Activated CD8-positive, alpha-beta T cell treated with anti-CD3 and anti-CD28 coated beads for 36 hours (primary cell): ENCODE measurements at regions of chr3 and their contacts with region 1.

Region 1: DNA sequence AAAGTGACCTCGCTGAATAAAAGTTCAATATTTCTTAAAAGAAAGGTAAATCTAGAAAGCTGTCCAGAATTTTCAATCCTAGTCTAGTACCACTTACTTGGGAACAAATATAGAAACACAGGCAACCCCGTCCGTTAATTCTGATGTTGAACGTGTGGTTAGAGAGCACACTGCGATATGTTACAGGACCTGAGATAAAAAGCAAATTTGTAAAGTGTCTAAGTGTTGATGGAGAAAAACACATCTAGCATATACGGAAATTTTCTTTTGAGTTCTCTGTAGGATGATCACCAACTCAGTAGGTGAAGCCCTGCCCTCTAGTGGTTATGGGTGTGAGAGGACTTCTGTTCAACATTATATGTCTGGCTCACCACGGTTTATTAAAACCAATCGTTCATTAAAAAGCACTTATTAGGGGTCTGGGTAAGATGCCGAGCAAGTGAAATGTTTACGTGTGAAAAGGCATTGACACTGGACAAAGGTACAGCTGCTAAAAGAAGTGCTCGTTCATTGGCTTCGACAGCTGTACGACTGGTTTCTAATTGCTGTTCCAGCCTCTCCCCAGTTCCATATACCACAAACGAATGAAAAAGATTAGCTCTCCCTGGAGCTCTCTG is 1.0 kb upstream of the ATP2C1 start:
- DNase-seq: peak; percentile 84
- ATAC-seq: peak; percentile 57
- H3K4me3 Mint-ChIP-seq: peak overlapping the region; percentile 97
- H3K27ac Mint-ChIP-seq: peak overlapping the region; percentile 98
- H3K4me1 Mint-ChIP-seq: peaks cover 32% of the 10 kb centered on the region
- H3K27me3 Mint-ChIP-seq: no peaks in the 10 kb centered on the region
- CTCF ChIP-seq: peak; percentile 91

Region 2: GRCh38 chr3:130529513-130530215 is 363.2 kb before region 1 on chr3:
- CTCF ChIA-PET with region 1: no interaction called
- POLR2A ChIA-PET with region 1: no interaction called
- intact Hi-C with region 1: no loop called
- DNase-seq: no peak
- ATAC-seq: peak; percentile 27
- H3K4me3 Mint-ChIP-seq: no peak overlapping the region
- H3K27ac Mint-ChIP-seq: no peak overlapping the region
- H3K4me1 Mint-ChIP-seq: peaks cover 10% of the 10 kb centered on the region
- H3K27me3 Mint-ChIP-seq: peaks cover 4% of the 10 kb centered on the region
- CTCF ChIP-seq: no peak

Region 3: DNA sequence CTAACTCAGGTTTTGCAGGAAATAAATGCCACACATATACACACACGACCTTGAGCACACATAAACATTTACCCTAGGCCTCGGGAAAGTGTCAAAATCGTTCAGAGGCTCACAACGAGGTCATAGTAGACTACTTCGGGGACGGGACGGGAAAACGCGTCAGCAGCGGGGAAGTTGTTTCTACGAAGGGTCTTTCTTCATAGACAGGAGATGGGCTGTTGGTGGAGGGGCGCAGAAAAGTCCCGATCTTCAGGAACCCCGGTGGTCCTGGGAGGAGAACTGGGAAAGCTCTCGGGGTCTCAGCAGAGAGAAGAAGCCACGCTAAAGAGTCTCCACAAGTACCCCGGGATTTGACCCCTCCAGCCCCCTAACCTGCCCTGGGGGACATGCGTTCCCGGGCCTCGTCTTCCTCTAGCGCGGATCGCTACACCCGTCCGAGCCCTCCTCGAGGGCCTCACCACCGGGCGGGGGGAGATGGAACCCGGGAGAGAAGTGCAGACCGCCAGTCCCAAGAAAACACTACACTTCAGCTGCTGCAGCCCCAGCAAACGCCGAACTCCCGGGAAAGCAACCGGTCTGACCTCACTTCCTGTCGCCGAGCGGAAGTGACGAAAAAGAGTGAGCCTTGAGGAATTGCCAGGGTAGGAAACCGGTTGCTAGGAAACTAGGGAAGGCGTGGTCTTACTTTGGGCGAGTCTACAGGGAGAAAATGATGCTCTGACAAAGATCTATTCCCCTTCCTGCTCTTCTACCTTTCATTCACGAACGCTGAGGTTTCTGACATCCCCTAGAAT is 146.4 kb before region 1 on chr3 and contains the start of gene PIK3R4:
- CTCF ChIA-PET with region 1: interaction called, 13 read pairs
- POLR2A ChIA-PET with region 1: interaction called, 17 read pairs
- intact Hi-C with region 1: no loop called
- DNase-seq: peak; percentile 98
- ATAC-seq: peak; percentile 84
- H3K4me3 Mint-ChIP-seq: peak within 1 kb of the TSS; percentile 85
- H3K27ac Mint-ChIP-seq: peak within 1 kb of the TSS; percentile 95
- H3K4me1 Mint-ChIP-seq: peaks cover 45% of the 10 kb centered on the region
- H3K27me3 Mint-ChIP-seq: no peaks in the 10 kb centered on the region
- CTCF ChIP-seq: no peak
- total RNA-seq, gene PIK3R4: 27.4 to 28.4 TPM

Region 4: GRCh38 chr3:130850044-130850797 is 42.6 kb before region 1 on chr3:
- CTCF ChIA-PET with region 1: interaction called, 16 read pairs
- POLR2A ChIA-PET with region 1: interaction called, 23 read pairs
- intact Hi-C with region 1: no loop called
- DNase-seq: peak; percentile 80
- ATAC-seq: peak; percentile 96
- H3K4me3 Mint-ChIP-seq: peak overlapping the region; percentile 57
- H3K27ac Mint-ChIP-seq: peak overlapping the region; percentile 60
- H3K4me1 Mint-ChIP-seq: peaks cover 40% of the 10 kb centered on the region
- H3K27me3 Mint-ChIP-seq: peaks cover 25% of the 10 kb centered on the region
- CTCF ChIP-seq: no peak

Region 5: GRCh38 chr3:130929804-130930203 is 36.9 kb after region 1 on chr3:
- CTCF ChIA-PET with region 1: interaction called, 11 read pairs
- POLR2A ChIA-PET with region 1: interaction called, 3 read pairs
- intact Hi-C with region 1: no loop called
- DNase-seq: no peak
- ATAC-seq: no peak
- H3K4me3 Mint-ChIP-seq: no peak overlapping the region
- H3K27ac Mint-ChIP-seq: no peak overlapping the region
- H3K4me1 Mint-ChIP-seq: peaks cover 35% of the 10 kb centered on the region
- H3K27me3 Mint-ChIP-seq: no peaks in the 10 kb centered on the region
- CTCF ChIP-seq: no peak

Region 6: GRCh38 chr3:131053043-131053859 is 160.4 kb after region 1 on chr3:
- CTCF ChIA-PET with region 1: no interaction called
- POLR2A ChIA-PET with region 1: no interaction called
- intact Hi-C with region 1: no loop called
- DNase-seq: no peak
- ATAC-seq: no peak
- H3K4me3 Mint-ChIP-seq: no peak overlapping the region
- H3K27ac Mint-ChIP-seq: no peak overlapping the region
- H3K4me1 Mint-ChIP-seq: no peaks in the 10 kb centered on the region
- H3K27me3 Mint-ChIP-seq: no peaks in the 10 kb centered on the region
- CTCF ChIP-seq: no peak